Activated B cell treated with CpG ODN at 0.5 μM for 24 hours (primary cell): ENCODE measurements at regions of chrX and their contacts with region 1.

Region 1: GRCh38 chrX:65581661-65582339 is 47.2 kb upstream of the LAS1L start:
- DNase-seq: no peak
- ATAC-seq: peak; percentile 67
- H3K4me3 Mint-ChIP-seq: no peak overlapping the region
- H3K27ac Mint-ChIP-seq: no peak overlapping the region
- H3K4me1 Mint-ChIP-seq: peaks cover 12% of the 10 kb centered on the region
- H3K27me3 Mint-ChIP-seq: no peaks in the 10 kb centered on the region
- CTCF ChIP-seq: no peak

Region 2: GRCh38 chrX:65522739-65523372 is 58.9 kb before region 1 on chrX:
- CTCF ChIA-PET with region 1: no interaction called
- POLR2A ChIA-PET with region 1: no interaction called
- intact Hi-C with region 1: no loop called
- DNase-seq: no peak
- ATAC-seq: no peak
- H3K4me3 Mint-ChIP-seq: no peak overlapping the region
- H3K27ac Mint-ChIP-seq: no peak overlapping the region
- H3K4me1 Mint-ChIP-seq: no peaks in the 10 kb centered on the region
- H3K27me3 Mint-ChIP-seq: no peaks in the 10 kb centered on the region
- CTCF ChIP-seq: no peak

Region 3: GRCh38 chrX:65534450-65535292 is 47.1 kb before region 1 on chrX and contains the start of gene LAS1L:
- CTCF ChIA-PET with region 1: no interaction called
- POLR2A ChIA-PET with region 1: no interaction called
- intact Hi-C with region 1: no loop called
- DNase-seq: peak; percentile 77
- ATAC-seq: peak; percentile 99
- H3K4me3 Mint-ChIP-seq: peak within 1 kb of the TSS; percentile 100
- H3K27ac Mint-ChIP-seq: peak within 1 kb of the TSS; percentile 98
- H3K4me1 Mint-ChIP-seq: peaks cover 23% of the 10 kb centered on the region
- H3K27me3 Mint-ChIP-seq: no peaks in the 10 kb centered on the region
- CTCF ChIP-seq: no peak
- total RNA-seq, gene LAS1L: 51.9 and 54.0 TPM in 2 replicates

Region 4: DNA sequence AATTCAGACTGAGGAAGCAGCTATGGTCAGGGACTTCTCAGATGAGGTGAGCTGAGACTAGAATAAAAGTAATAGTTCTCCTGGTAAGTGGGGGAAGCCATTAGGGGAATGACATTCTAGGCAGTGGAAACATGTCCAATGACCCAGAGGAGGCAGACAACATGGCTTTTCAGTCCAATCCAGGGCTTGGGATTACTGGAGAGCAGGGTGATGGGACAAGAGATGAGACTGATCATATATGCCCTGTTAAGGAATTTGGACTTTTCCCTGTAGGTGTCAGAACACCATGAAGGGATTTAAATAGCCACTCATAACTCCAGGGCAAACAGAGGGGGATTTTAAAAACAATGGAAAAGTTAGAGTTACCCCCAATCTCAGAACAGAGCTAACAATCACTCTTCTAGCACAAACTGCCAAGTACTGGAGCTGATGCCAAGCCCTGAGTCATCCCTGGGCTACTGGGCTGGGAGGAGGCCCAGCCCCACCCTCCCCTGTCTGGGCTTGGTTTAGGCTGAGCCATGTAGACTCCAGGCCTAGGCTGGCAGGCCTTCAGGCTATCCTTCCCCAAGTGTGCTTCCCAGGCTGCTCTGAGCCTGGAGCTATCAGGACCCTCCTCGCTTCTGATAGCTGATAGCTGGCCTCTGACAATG is 62.9 kb after region 1 on chrX:
- CTCF ChIA-PET with region 1: no interaction called
- POLR2A ChIA-PET with region 1: no interaction called
- intact Hi-C with region 1: no loop called
- DNase-seq: no peak
- ATAC-seq: no peak
- H3K4me3 Mint-ChIP-seq: no peak overlapping the region
- H3K27ac Mint-ChIP-seq: no peak overlapping the region
- H3K4me1 Mint-ChIP-seq: peaks cover 2% of the 10 kb centered on the region
- H3K27me3 Mint-ChIP-seq: no peaks in the 10 kb centered on the region
- CTCF ChIP-seq: no peak

Region 5: DNA sequence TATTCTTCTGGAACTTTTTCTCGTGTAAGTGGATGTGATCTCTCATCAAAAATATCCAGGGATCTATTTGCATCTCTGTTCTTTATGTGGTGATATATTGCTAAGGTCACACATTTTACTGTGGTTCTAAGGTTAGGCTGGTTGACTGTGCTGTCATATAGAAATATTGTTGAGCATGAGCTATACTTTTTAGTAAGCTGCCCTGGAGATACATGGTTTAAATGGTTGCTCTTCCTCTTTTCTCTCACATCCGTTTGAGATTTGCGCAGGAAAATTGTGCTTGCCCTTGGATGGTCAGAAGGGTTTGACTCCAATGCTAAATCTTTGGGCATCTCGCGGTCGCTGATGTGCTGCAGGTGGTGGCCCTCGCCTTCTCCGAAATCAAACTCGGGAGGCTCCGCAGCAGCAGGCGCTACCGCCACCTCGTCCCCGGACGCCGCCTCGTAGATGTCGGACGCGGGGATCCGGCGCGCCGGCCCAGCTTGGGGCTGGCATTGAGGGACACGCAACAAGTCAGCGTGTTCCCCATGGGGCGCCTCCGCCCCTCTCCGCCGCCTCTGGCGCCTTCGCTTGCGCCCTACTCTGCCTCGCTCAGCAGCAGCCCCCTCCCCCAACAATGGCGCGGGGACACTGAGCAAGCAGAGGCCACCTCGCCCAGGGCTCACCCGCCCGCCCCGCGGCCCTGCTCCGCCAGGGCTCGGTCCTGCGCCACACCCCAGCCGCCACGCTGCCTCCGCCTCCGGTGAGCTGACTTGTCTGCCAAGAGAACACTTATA is 240.1 kb after region 1 on chrX:
- CTCF ChIA-PET with region 1: no interaction called
- POLR2A ChIA-PET with region 1: no interaction called
- intact Hi-C with region 1: no loop called
- DNase-seq: peak; percentile 35
- ATAC-seq: peak; percentile 79
- H3K4me3 Mint-ChIP-seq: peak overlapping the region; percentile 78
- H3K27ac Mint-ChIP-seq: peak overlapping the region; percentile 72
- H3K4me1 Mint-ChIP-seq: peaks cover 16% of the 10 kb centered on the region
- H3K27me3 Mint-ChIP-seq: no peaks in the 10 kb centered on the region
- CTCF ChIP-seq: no peak

Region 6: DNA sequence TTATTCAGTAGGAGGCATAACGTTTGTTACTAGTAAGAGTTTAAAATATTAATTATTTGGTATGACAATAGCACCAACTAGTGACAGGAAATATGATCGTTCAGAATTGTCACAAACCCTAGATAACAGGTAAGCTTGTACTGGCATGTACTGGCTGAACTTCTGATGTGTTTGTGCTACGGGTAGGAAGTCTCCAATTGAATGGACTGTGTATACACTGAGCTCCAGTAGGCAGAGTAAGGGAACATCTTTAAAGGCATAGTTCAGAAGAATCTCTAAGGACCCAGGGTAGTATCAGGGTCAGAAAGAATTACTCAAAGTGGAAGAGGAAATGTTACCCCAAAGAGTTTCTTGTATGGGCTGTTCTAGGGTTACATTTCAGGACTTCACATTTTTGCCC is 826.7 kb after region 1 on chrX:
- CTCF ChIA-PET with region 1: interaction called, 4 read pairs
- POLR2A ChIA-PET with region 1: no interaction called
- intact Hi-C with region 1: loop called (anchors 2 kb)
- DNase-seq: no peak
- ATAC-seq: no peak
- H3K4me3 Mint-ChIP-seq: no peak overlapping the region
- H3K27ac Mint-ChIP-seq: no peak overlapping the region
- H3K4me1 Mint-ChIP-seq: no peaks in the 10 kb centered on the region
- H3K27me3 Mint-ChIP-seq: no peaks in the 10 kb centered on the region
- CTCF ChIP-seq: no peak

Region 7: DNA sequence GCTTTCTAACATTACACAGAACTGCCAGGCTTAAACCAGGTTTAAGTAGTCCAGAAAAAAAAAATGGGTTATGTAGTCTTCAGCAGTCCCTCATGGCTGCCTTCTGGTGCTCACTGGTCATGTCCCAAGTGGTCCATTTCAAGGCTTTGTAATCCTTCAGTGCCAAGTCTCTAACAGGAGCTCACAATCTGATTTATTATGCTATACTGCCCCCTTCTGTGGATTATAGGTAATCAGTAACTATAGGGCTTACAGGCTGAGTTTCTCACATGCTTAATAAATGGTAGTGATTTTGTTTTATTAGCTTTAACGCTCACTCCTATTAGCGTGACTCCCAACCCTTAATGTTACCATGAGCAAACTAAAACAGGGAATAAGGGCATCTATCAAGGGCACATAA is 1149.6 kb after region 1 on chrX:
- CTCF ChIA-PET with region 1: interaction called, 11 read pairs
- POLR2A ChIA-PET with region 1: no interaction called
- intact Hi-C with region 1: no loop called
- DNase-seq: no peak
- ATAC-seq: no peak
- H3K4me3 Mint-ChIP-seq: no peak overlapping the region
- H3K27ac Mint-ChIP-seq: no peak overlapping the region
- H3K4me1 Mint-ChIP-seq: peaks cover 5% of the 10 kb centered on the region
- H3K27me3 Mint-ChIP-seq: no peaks in the 10 kb centered on the region
- CTCF ChIP-seq: no peak